Activated CD4-positive, alpha-beta memory T cell treated with anti-CD3 and anti-CD28 coated beads for 36 hours (primary cell): ENCODE measurements at regions of chr5 and their contacts with region 1.

Region 1: GRCh38 chr5:1737790-1738405 is 61.7 kb downstream of the MRPL36 start:
- DNase-seq: peak; percentile 58
- H3K4me3 Mint-ChIP-seq: no peak overlapping the region
- H3K27ac Mint-ChIP-seq: no peak overlapping the region
- H3K4me1 Mint-ChIP-seq: no peaks in the 10 kb centered on the region
- H3K27me3 Mint-ChIP-seq: peaks cover 22% of the 10 kb centered on the region

Region 2: DNA sequence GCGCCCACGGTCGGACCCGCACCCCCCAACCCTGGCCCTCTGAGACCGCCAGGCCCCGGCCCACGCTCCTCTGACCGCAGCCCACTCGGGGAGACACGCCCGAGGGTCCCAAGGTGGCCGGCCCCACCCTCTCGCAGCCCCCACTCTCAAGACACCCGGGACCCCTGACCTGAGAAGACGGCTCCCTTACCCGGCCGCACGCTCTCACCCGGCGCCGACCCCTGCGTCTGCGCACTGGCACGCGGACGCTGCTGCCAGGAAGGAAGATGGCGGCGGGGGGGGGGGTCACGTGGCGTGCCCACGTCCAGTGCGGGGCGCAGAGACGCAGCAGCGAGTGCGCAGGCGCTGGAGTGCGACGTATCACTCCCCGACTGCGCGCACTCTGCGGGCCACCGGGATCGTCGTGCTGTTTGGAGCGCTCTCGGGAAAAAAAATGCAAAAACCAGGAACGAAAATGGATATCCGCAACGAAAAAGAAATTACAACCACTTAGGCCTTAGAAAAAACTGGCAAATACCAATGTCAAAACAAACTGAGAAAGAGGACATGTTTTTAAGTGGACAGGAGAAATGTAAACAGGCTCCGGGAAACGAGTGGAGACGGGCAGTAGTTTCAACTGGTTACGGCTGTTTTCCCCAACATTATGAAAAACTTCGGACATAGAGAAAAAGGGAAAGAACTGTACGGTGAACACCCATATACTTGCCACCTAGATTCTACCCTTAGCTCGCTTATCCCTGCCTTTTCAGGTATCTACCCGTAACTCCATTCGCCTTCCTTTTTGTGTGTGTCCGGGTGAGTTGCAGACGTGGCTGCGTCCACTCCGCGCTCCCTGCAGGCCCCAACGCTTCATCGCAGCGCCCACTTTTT is 61.9 kb after region 1 on chr5 and contains the start of gene MRPL36:
- CTCF ChIA-PET with region 1: interaction called, 3 read pairs
- POLR2A ChIA-PET with region 1: no interaction called
- intact Hi-C with region 1: loop called (anchors 10 kb)
- DNase-seq: peak; percentile 95
- H3K4me3 Mint-ChIP-seq: peak within 1 kb of the TSS; percentile 100
- H3K27ac Mint-ChIP-seq: peak within 1 kb of the TSS; percentile 99
- H3K4me1 Mint-ChIP-seq: peaks cover 56% of the 10 kb centered on the region
- H3K27me3 Mint-ChIP-seq: no peaks in the 10 kb centered on the region
- total RNA-seq, gene MRPL36: 60.8 to 64.7 TPM

Region 3: GRCh38 chr5:1930880-1931603 is 193.1 kb after region 1 on chr5:
- CTCF ChIA-PET with region 1: no interaction called
- POLR2A ChIA-PET with region 1: no interaction called
- intact Hi-C with region 1: no loop called
- DNase-seq: no peak
- H3K4me3 Mint-ChIP-seq: no peak overlapping the region
- H3K27ac Mint-ChIP-seq: no peak overlapping the region
- H3K4me1 Mint-ChIP-seq: peaks cover 2% of the 10 kb centered on the region
- H3K27me3 Mint-ChIP-seq: peaks cover 15% of the 10 kb centered on the region